Activated naive CD4-positive, alpha-beta T cell treated with anti-CD3 and anti-CD28 coated beads for 36 hours (primary cell): ENCODE measurements at regions of chr1 and their contacts with region 1.

Region 1: DNA sequence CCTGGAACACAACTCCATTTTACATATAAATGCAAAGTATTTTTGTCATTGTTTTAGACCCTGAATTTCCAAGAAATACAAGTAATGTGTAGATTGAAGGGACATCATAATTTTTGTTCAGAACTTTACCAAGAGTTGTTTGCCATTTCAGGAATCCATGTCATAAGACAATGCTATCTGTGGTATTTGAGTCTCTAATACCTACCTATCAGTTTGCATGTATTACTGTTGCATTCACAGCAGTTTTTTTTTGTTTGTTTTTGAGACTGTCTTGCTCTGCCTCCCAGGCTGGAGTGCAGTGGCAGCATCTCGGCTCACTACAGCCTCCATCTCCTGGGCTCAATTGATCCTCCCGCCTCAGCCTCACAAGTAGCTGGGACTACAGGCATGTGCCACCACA is 17.1 kb downstream of the MPZ start:
- DNase-seq: no peak
- H3K4me3 Mint-ChIP-seq: no peak overlapping the region
- H3K27ac Mint-ChIP-seq: no peak overlapping the region
- H3K4me1 Mint-ChIP-seq: no peaks in the 10 kb centered on the region
- H3K27me3 Mint-ChIP-seq: no peaks in the 10 kb centered on the region

Region 2: DNA sequence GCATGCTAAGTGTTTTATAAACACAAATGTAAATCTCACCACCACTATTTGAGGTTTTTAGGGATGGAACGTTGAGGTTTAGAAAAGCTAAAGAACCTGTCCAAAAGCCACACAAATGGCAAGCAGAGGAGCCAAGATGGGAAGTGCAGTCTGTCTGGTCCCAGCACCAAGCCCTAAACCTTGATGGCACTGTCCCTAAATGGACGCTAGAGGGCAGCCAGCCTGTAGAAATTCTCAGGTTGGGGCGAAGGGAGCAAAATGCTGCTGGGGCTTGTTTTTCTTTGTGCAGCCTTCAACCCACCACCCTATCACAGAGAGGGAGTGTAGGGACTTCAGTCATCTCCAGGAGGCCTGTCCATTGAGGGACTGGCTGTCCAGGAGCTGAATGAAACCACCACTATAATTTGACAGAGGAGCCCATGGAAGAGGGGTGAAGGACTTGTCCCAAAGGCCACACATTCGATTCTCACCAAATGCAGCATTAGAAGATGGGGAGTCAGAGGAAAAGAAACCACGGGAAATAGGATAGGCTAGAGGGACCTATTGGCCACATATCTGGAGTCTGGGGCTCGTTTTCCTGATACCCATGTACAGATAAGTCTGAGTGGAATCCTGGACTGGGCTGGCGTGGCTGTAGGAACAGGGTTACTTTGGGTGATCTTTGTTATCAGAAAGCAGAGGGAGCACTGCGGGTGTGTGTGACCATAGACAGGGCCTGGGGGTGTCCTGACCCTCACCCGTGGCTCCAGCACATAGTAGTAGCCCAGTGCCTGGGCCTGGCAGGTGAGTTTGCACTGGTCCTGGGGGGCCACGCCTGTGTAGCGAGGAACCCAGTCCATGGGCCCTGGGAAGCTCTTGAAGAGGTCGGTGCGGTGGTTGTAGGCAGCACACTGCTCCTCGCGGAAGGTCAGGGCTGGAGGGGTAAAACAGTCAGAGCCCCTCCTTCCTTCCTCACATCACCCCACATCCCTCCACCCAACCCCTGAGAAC is 99.9 kb before region 1 on chr1:
- CTCF ChIA-PET with region 1: interaction called, 15 read pairs
- intact Hi-C with region 1: loop called (anchors 1 kb)
- DNase-seq: peak; percentile 84
- H3K4me3 Mint-ChIP-seq: no peak overlapping the region
- H3K27ac Mint-ChIP-seq: peak overlapping the region; percentile 51
- H3K4me1 Mint-ChIP-seq: peaks cover 34% of the 10 kb centered on the region
- H3K27me3 Mint-ChIP-seq: no peaks in the 10 kb centered on the region

Region 3: DNA sequence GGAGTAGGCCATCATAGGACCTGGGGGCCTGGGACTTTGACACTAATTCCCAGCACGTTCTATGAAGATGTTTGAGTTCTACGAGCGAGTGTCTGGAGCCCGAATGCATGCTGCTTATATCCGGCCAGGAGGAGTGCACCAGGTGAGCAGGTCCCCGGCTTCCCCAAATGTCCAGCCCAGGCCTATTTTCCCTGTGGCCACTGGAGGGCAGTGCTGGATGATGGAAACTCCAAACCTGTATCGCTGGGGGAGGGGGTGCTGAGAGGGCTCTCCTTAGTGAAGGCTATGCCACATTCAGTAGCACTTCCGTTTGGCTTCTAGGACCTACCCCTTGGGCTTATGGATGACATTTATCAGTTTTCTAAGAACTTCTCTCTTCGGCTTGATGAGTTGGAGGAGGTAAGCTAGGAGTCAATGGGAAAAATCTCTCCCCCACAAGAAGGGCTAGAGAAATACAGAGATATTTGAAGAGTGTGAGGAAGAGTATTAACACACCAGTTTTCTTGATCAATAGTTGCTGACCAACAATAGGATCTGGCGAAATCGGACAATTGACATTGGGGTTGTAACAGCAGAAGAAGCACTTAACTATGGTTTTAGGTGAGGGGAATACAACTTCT is 82.7 kb before region 1 on chr1:
- CTCF ChIA-PET with region 1: interaction called, 14 read pairs
- intact Hi-C with region 1: no loop called
- DNase-seq: peak; percentile 86
- H3K4me3 Mint-ChIP-seq: no peak overlapping the region
- H3K27ac Mint-ChIP-seq: peak overlapping the region; percentile 50
- H3K4me1 Mint-ChIP-seq: peaks cover 37% of the 10 kb centered on the region
- H3K27me3 Mint-ChIP-seq: no peaks in the 10 kb centered on the region

Region 4: GRCh38 chr1:161216945-161217712 is 75.5 kb before region 1 on chr1:
- CTCF ChIA-PET with region 1: interaction called, 16 read pairs
- intact Hi-C with region 1: no loop called
- DNase-seq: no peak
- H3K4me3 Mint-ChIP-seq: no peak overlapping the region
- H3K27ac Mint-ChIP-seq: no peak overlapping the region
- H3K4me1 Mint-ChIP-seq: peaks cover 55% of the 10 kb centered on the region
- H3K27me3 Mint-ChIP-seq: no peaks in the 10 kb centered on the region

Region 5: GRCh38 chr1:161238039-161238473 is 54.6 kb before region 1 on chr1 and contains the start of gene NR1I3:
- CTCF ChIA-PET with region 1: interaction called, 20 read pairs
- intact Hi-C with region 1: no loop called
- DNase-seq: no peak
- H3K4me3 Mint-ChIP-seq: no peak within 1 kb of the TSS
- H3K27ac Mint-ChIP-seq: no peak within 1 kb of the TSS
- H3K4me1 Mint-ChIP-seq: no peaks in the 10 kb centered on the region
- H3K27me3 Mint-ChIP-seq: no peaks in the 10 kb centered on the region
- total RNA-seq, gene NR1I3: not detected

Region 6: GRCh38 chr1:161305867-161306519 is 13.4 kb after region 1 on chr1:
- CTCF ChIA-PET with region 1: interaction called, 17 read pairs
- intact Hi-C with region 1: no loop called
- DNase-seq: peak; percentile 89
- H3K4me3 Mint-ChIP-seq: peak overlapping the region; percentile 96
- H3K27ac Mint-ChIP-seq: peak overlapping the region; percentile 83
- H3K4me1 Mint-ChIP-seq: peaks cover 33% of the 10 kb centered on the region
- H3K27me3 Mint-ChIP-seq: no peaks in the 10 kb centered on the region

Region 7: DNA sequence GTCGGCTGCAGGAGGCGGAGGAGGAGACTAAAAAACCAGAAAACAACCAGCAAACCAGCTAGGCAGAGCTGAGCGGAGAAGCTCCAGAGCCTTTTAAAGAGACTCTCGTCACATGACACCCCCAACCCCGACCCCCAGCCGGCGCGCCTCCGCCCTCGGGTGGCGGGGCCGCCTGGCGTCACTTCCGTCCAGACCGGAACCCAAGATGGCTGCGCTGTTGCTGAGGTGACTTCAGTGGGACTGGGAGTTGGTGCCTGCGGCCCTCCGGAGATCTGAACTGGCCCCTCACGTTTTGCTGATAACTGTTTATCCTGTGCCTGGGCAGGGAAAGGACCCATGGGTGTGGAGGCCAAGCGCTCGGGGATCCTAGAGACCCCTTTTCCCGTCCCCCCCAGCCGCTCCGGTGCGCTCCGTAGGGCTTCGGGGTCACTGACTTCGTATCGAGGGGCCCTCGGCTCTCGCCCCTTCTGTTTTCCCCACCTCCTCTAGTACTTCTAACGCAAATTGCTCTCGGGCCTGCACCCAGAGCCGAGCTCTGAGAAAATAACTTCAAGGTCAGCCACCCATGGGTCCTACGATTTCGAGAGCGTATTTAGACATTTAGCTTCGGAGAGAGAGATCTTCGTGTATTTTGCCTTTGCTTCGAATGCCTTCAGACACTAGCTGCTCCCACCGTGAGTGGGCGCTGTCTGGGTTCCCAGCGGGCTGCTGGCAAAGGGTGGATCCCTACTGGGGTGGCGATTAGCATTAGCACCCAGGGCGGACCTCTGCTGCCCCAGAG is 21.8 kb after region 1 on chr1 and contains the start of gene SDHC:
- CTCF ChIA-PET with region 1: interaction called, 13 read pairs
- intact Hi-C with region 1: no loop called
- DNase-seq: peak; percentile 89
- H3K4me3 Mint-ChIP-seq: peak within 1 kb of the TSS; percentile 97
- H3K27ac Mint-ChIP-seq: peak within 1 kb of the TSS; percentile 92
- H3K4me1 Mint-ChIP-seq: peaks cover 21% of the 10 kb centered on the region
- H3K27me3 Mint-ChIP-seq: no peaks in the 10 kb centered on the region
- total RNA-seq, gene SDHC: 201 TPM